Heart right ventricle (tissue), 16 donors: ENCODE measurements at regions of chr19 and their contacts with region 1.

Region 1: GRCh38 chr19:51593969-51594773 is 23.1 kb downstream of the ZNF175 start:
- DNase-seq: peak; percentile 98 to 99
- ATAC-seq: peak; percentile 99 to 100 (median 100)
- H3K4me3 ChIP-seq: peak overlapping the region; percentile 49 to 84 (median 71)
- H3K27ac ChIP-seq: peak overlapping the region in 9 of 10 donors; percentile 7 to 81 (median 43)
- H3K4me1 ChIP-seq: peaks cover 0 to 17% (median 14%) of the 10 kb centered on the region in 9 donors
- H3K27me3 ChIP-seq: peaks cover 0 to 19% (median 13%) of the 10 kb centered on the region in 7 donors
- CTCF ChIP-seq: no peak

Region 2: DNA sequence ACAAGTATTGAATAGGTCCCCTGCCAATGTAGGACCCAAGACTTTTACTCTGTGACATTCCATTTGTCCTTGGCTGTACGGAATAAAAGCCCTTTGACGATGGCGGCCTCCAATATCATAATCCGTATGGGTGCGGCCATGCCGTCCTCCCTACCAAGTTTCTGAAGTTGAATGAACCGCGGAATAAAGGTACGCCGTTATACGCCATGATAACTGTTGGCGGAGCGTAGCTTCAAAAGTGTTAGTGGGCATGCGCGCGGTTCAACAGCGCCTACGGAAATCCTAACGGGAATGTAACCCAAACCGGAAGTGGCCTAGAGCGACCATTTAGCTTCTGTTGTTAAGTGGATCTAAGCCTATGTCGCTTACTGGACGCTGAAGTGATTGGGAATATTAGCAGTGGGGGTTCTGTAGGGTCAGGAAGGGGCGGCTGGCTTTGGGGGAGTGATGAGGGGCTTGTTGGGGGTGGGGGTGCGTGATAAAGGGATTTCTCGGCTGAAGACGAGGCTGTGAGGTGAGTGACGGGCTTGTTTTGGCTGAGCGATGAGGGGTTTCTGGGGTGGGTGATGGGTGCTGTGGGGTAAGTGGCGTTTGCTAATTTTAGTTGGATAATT is 23.1 kb before region 1 on chr19 and contains the start of gene ZNF175:
- intact Hi-C with region 1: loop called in 3 of 10 experiments (anchors 1 kb)
- DNase-seq: peak; percentile 88 to 97
- ATAC-seq: peak; percentile 99 to 100 (median 100)
- H3K4me3 ChIP-seq: peak within 1 kb of the TSS; percentile 50 to 80 (median 68)
- H3K27ac ChIP-seq: peak within 1 kb of the TSS in 8 of 10 donors; percentile 20 to 73 (median 68)
- H3K4me1 ChIP-seq: peaks cover 0 to 26% (median 17%) of the 10 kb centered on the region in 9 donors
- H3K27me3 ChIP-seq: peaks cover 0 to 16% (median 7%) of the 10 kb centered on the region in 7 donors
- CTCF ChIP-seq: no peak
- total RNA-seq, gene ZNF175: 4.5 to 9.6 (median 8.3) TPM

Region 3: GRCh38 chr19:51607920-51608562 is 13.9 kb after region 1 on chr19:
- intact Hi-C with region 1: no loop called
- DNase-seq: peak; percentile 74 to 76
- ATAC-seq: peak in 7 of 8 donors; percentile 39 to 75 (median 61)
- H3K4me3 ChIP-seq: no peak overlapping the region
- H3K27ac ChIP-seq: no peak overlapping the region
- H3K4me1 ChIP-seq: no peaks in the 10 kb centered on the region
- H3K27me3 ChIP-seq: peaks cover 0 to 20% (median 8%) of the 10 kb centered on the region in 7 donors
- CTCF ChIP-seq: peak; percentile 15 to 74 (median 55)

Region 4: DNA sequence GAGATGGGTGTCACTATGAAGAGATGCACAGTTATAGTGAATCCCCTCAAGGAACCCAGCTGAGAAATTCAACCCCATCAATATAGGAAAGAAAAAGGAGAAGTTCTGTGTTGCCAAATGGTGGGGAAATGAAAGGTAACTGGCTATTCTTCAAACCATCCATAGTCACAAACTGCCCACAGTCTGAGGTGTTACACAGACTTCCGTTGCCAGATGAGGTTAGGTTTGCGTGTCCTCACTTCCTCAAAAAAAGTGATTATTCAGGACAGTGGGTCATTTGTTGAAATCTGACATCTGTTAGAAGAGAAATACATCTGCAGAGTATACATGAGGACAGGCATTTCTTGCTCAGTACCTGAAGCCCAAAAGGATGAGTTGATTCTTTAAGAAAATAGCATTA is 27.0 kb after region 1 on chr19:
- intact Hi-C with region 1: no loop called
- DNase-seq: no peak
- ATAC-seq: no peak
- H3K4me3 ChIP-seq: no peak overlapping the region
- H3K27ac ChIP-seq: peak overlapping the region in 1 of 10 donors; percentile 13
- H3K4me1 ChIP-seq: peaks cover 0 to 11% (median 0%) of the 10 kb centered on the region in 9 donors
- H3K27me3 ChIP-seq: peaks cover 0 to 18% (median 7%) of the 10 kb centered on the region in 7 donors
- CTCF ChIP-seq: no peak